ENCODE measurements at regions of chr15 and their contacts with region 1.

Region 1: GRCh38 chr15:69475769-69476358 is 23.2 kb downstream of the RPLP1 start:
- DNase-seq: peak; percentile 79 to 89
- H3K4me3 ChIP-seq: no peak overlapping the region
- H3K27ac ChIP-seq: no peak overlapping the region
- H3K4me1 ChIP-seq: no peaks in the 10 kb centered on the region
- H3K27me3 ChIP-seq: no peaks in the 10 kb centered on the region
- CTCF ChIP-seq: peak; percentile 94 to 96 (median 95)
- POLR2A ChIP-seq: no peak

Region 2: GRCh38 chr15:70488002-70488605 is 1012.2 kb after region 1 on chr15:
- intact Hi-C with region 1: loop called (anchors 5 kb)
- DNase-seq: peak; percentile 68 to 77
- H3K4me3 ChIP-seq: no peak overlapping the region
- H3K27ac ChIP-seq: no peak overlapping the region
- H3K4me1 ChIP-seq: no peaks in the 10 kb centered on the region
- H3K27me3 ChIP-seq: no peaks in the 10 kb centered on the region
- CTCF ChIP-seq: peak; percentile 95 to 96 (median 96)
- POLR2A ChIP-seq: no peak